Motor neuron (in vitro differentiated cells): ENCODE measurements at regions of chr5 and their contacts with region 1.

Region 1: GRCh38 chr5:168114444-168115017 is 176.9 kb upstream of the WWC1 start:
- ATAC-seq: peak in 5 of 8 experiments; percentile 50 to 97 (median 78)
- H3K4me3 ChIP-seq: no peak overlapping the region
- H3K27ac ChIP-seq: no peak overlapping the region
- H3K4me1 ChIP-seq: peaks cover 7 to 42% of the 10 kb centered on the region in 2 donors

Region 2: DNA sequence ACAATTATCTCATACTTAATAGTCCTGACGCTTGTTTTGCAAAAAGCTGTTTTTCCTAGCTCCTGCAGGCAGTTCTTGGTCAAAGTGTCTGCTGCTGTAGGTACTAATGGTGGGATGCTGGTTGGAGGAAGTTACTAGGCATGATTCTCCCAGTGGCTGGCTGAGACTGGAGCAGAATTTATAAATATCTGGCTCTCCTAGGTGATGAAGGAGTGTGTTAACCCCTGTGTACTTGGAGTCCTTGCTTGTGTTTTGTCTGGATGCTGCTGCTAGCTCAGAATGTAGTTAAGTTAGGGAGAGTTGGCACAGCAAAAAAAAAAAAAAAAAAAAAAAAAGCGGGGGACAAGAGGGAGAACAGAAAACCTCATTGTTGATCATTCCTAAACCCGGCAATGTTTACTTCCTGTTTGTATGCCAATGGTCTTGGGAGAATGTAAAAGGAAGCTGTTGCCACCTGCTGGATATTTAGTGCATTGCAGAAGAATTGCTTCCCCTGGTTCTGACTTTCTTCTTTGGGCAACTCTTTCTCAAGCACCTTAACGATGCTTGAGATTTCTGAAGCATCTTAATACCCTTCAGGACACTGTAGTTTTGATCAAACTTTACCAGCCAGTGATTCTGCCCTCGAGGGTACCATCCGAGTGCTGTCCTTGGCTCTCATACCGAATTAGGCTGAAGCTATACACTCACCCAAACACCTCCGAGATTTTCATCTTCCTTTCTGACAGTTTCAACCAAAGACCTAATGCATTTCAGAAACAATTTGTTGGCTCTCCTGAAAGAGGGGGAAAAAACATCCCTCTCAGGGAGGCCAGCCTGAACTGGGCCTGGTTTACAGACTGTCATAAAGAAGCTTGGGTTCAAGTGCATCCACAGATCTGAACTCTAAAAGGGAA is 105.2 kb after region 1 on chr5:
- in situ Hi-C with region 1: loop called in 2 of 9 experiments (anchors 10 to 25 kb)
- ATAC-seq: peak; percentile 65 to 91 (median 80)
- H3K4me3 ChIP-seq: no peak overlapping the region
- H3K27ac ChIP-seq: no peak overlapping the region
- H3K4me1 ChIP-seq: peaks cover 5 to 6% of the 10 kb centered on the region in 2 donors